HCT116 (cell line): ENCODE measurements at regions of chr2 and their contacts with region 1.

Region 1: GRCh38 chr2:172465417-172466334 is 38.3 kb downstream of the ITGA6 start:
- DNase-seq: no peak
- ATAC-seq: peak; percentile 51
- H3K4me3 ChIP-seq: no peak overlapping the region
- H3K27ac ChIP-seq: no peak overlapping the region
- H3K4me1 ChIP-seq: peaks cover 23 to 50% of the 10 kb centered on the region in 2 experiments
- H3K27me3 ChIP-seq: no peaks in the 10 kb centered on the region
- CTCF ChIP-seq: peak; percentile 58 to 84 (median 78); a peak in 5 of 6 replicates
- POLR2A ChIP-seq: no peak
- RAD21 ChIP-seq: peak; percentile 90

Region 2: GRCh38 chr2:171811245-171811628 is 654.4 kb before region 1 on chr2:
- CTCF ChIA-PET with region 1: no interaction called
- POLR2A ChIA-PET with region 1: no interaction called
- RAD21 ChIA-PET with region 1: no interaction called
- intact Hi-C with region 1: loop called (anchors 5 kb)
- DNase-seq: peak; percentile 8
- ATAC-seq: peak; percentile 66
- H3K4me3 ChIP-seq: no peak overlapping the region
- H3K27ac ChIP-seq: no peak overlapping the region
- H3K4me1 ChIP-seq: peaks cover 15 to 19% of the 10 kb centered on the region in 2 experiments
- H3K27me3 ChIP-seq: no peaks in the 10 kb centered on the region
- CTCF ChIP-seq: peak; percentile 10 to 70 (median 52); a peak in 4 of 6 replicates
- POLR2A ChIP-seq: no peak
- RAD21 ChIP-seq: peak; percentile 86

Region 3: DNA sequence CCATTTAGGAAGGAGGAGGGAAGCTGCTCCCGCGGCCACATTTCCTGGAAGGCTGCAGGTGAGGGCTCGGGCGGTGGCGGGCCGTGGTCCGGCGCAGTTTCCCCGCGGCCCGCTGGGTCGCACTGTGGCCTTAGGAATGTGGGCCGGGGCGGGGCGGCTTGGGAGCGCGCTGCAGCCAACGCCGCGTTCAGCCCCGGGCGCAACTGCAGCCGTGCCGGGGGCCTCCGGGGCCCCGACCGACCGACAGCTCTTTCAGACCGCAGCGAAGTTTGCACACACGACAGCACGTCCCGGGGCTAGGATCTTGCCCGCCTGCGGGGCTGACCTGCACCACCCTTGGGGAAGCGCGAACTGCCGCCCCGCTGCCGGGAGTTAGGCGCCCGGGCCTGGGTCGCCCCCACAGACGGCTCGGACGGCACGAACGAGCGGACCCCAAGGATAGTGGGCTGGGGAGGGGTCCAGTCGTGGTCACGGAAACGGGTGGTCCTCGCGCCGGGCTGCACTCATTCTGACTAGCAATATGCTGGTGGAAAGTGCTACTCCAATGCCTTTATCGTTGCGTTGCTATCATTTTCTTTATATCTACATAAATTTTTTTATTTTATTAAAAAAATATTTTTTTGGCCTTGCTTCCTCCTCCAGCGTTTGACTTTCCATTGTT is 293.0 kb before region 1 on chr2:
- CTCF ChIA-PET with region 1: interaction called, 73 read pairs
- POLR2A ChIA-PET with region 1: interaction called, 8 read pairs
- RAD21 ChIA-PET with region 1: interaction called, 8 to 9 read pairs
- intact Hi-C with region 1: loop called (anchors 1 kb)
- DNase-seq: peak; percentile 33
- ATAC-seq: peak; percentile 100
- H3K4me3 ChIP-seq: peak overlapping the region; percentile 47 to 63
- H3K27ac ChIP-seq: no peak overlapping the region; the same call in 1 of the 2 replicates
- H3K4me1 ChIP-seq: peaks cover 5 to 13% of the 10 kb centered on the region in 2 experiments
- H3K27me3 ChIP-seq: no peaks in the 10 kb centered on the region
- CTCF ChIP-seq: peak; percentile 73 to 86 (median 79)
- POLR2A ChIP-seq: no peak
- RAD21 ChIP-seq: peak; percentile 97

Region 4: GRCh38 chr2:172246649-172247048 is 219.0 kb before region 1 on chr2:
- CTCF ChIA-PET with region 1: interaction called, 22 read pairs
- POLR2A ChIA-PET with region 1: interaction called, 4 read pairs
- RAD21 ChIA-PET with region 1: no interaction called
- intact Hi-C with region 1: no loop called
- DNase-seq: peak; percentile 63
- ATAC-seq: peak; percentile 61
- H3K4me3 ChIP-seq: peak overlapping the region; percentile 6 to 7
- H3K27ac ChIP-seq: peak overlapping the region; percentile 76
- H3K4me1 ChIP-seq: peaks cover 58 to 90% of the 10 kb centered on the region in 2 experiments
- H3K27me3 ChIP-seq: no peaks in the 10 kb centered on the region
- CTCF ChIP-seq: no peak
- POLR2A ChIP-seq: peak; percentile 64
- RAD21 ChIP-seq: no peak

Region 5: DNA sequence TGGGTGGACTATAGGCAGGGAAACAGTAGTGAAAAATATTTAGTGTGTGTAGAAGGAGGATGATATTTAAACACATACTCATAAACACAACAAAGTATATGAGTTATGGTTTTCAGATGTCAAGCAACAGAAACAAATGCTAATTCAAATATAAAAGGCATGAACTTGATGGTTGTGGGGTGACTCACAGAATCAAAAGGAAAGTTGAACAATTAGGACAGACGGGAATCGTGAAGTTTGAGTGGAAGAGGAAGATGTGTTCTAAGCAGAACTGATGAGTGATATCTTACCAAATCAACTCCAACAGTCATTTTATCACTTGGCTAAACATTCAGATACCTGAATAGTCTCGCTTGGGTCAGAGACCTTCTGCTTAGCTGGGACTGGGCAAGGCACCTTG is 91.9 kb before region 1 on chr2:
- CTCF ChIA-PET with region 1: no interaction called
- POLR2A ChIA-PET with region 1: no interaction called
- RAD21 ChIA-PET with region 1: no interaction called
- intact Hi-C with region 1: no loop called
- DNase-seq: no peak
- ATAC-seq: no peak
- H3K4me3 ChIP-seq: no peak overlapping the region
- H3K27ac ChIP-seq: no peak overlapping the region
- H3K4me1 ChIP-seq: no peaks in the 10 kb centered on the region
- H3K27me3 ChIP-seq: no peaks in the 10 kb centered on the region
- CTCF ChIP-seq: no peak
- POLR2A ChIP-seq: no peak
- RAD21 ChIP-seq: no peak

Region 6: DNA sequence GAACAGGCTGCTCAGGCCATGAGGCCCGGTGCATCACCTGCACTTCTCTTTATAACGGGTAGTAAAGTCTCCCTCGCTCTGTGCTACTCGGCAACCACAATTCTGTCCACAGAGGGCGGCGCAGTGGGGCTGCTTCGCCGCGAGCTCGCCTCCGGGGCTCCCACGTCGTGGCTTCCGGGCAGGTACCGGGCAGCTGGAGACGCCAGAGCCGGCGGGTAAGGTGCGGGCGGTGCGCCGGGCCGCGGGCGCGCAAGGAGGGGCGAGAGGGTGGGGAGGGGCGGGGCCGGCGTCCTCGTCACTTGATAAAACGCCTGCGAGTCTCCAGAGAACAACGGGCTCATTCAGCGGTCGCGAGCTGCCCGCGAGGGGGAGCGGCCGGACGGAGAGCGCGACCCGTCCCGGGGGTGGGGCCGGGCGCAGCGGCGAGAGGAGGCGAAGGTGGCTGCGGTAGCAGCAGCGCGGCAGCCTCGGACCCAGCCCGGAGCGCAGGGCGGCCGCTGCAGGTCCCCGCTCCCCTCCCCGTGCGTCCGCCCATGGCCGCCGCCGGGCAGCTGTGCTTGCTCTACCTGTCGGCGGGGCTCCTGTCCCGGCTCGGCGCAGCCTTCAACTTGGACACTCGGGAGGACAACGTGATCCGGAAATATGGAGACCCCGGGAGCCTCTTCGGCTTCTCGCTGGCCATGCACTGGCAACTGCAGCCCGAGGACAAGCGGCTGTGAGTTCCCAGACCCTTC is 38.3 kb before region 1 on chr2 and contains the start of gene ITGA6:
- CTCF ChIA-PET with region 1: interaction called, 22 read pairs
- POLR2A ChIA-PET with region 1: interaction called, 18 read pairs
- RAD21 ChIA-PET with region 1: interaction called, 5 to 9 read pairs
- intact Hi-C with region 1: loop called (anchors 1 kb)
- DNase-seq: peak; percentile 83
- ATAC-seq: peak; percentile 85
- H3K4me3 ChIP-seq: peak within 1 kb of the TSS; percentile 60 to 73
- H3K27ac ChIP-seq: peak within 1 kb of the TSS; percentile 84
- H3K4me1 ChIP-seq: peaks cover 31 to 48% of the 10 kb centered on the region in 2 experiments
- H3K27me3 ChIP-seq: no peaks in the 10 kb centered on the region
- CTCF ChIP-seq: peak in 1 of 3 experiments; percentile 13; a peak in 1 of 6 replicates
- POLR2A ChIP-seq: peak; percentile 94
- RAD21 ChIP-seq: peak; percentile 46
- total RNA-seq, gene ITGA6: 93.1 TPM

Region 7: GRCh38 chr2:172905937-172906811 is 440.5 kb after region 1 on chr2:
- CTCF ChIA-PET with region 1: no interaction called
- POLR2A ChIA-PET with region 1: no interaction called
- RAD21 ChIA-PET with region 1: no interaction called
- intact Hi-C with region 1: no loop called
- DNase-seq: no peak
- ATAC-seq: no peak
- H3K4me3 ChIP-seq: no peak overlapping the region
- H3K27ac ChIP-seq: no peak overlapping the region
- H3K4me1 ChIP-seq: no peaks in the 10 kb centered on the region
- H3K27me3 ChIP-seq: no peaks in the 10 kb centered on the region
- CTCF ChIP-seq: no peak
- POLR2A ChIP-seq: no peak
- RAD21 ChIP-seq: no peak